ENCODE measurements at regions of chr3 and their contacts with region 1.

Region 1: DNA sequence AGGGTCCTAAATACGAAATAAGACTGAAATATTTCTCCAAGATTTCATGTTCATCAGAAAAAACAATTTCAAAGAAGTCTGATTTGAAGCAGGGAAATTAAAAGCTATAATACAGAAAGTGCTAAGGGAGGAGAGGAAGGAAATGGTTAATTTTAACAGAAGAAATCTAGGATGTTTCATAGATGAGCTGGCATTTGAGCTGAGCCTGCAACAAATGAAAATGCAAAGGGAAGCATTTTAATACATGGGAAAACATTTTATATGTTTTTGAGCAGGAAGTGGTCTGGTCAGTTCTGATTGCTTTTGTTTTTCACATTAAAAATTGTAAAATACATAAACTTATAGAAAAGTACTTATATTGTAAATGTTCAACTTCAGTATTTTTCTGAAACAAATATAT is 17.2 kb upstream of the RAP2B start:
- DNase-seq: no peak
- ATAC-seq: no peak

Region 2: GRCh38 chr3:153069598-153070510 is 74.9 kb before region 1 on chr3:
- intact Hi-C with region 1: loop called (anchors 10 kb)
- DNase-seq: no peak
- ATAC-seq: peak; percentile 57